CD4-positive, alpha-beta memory T cell (primary cell): ENCODE measurements at regions of chr22 and their contacts with region 1.

Region 1: GRCh38 chr22:30386960-30387827 is at the start of gene RNF215:
- DNase-seq: peak; percentile 66 to 85 (median 79)
- H3K4me3 ChIP-seq: no peak within 1 kb of the TSS
- H3K4me3 Mint-ChIP-seq: peak within 1 kb of the TSS; percentile 63 to 84 (median 79)
- H3K27ac ChIP-seq: no peak within 1 kb of the TSS
- H3K27ac Mint-ChIP-seq: peak within 1 kb of the TSS in 5 of 7 donors; percentile 0 to 94 (median 84)
- H3K4me1 ChIP-seq: peaks cover 13% of the 10 kb centered on the region
- H3K4me1 Mint-ChIP-seq: peaks cover 9 to 15% (median 11%) of the 10 kb centered on the region in 4 donors
- H3K27me3 ChIP-seq: no peaks in the 10 kb centered on the region
- H3K27me3 Mint-ChIP-seq: peaks cover 0 to 2% of the 10 kb centered on the region in 2 donors
- total RNA-seq, gene RNF215: 6.1 to 6.6 TPM

Region 2: DNA sequence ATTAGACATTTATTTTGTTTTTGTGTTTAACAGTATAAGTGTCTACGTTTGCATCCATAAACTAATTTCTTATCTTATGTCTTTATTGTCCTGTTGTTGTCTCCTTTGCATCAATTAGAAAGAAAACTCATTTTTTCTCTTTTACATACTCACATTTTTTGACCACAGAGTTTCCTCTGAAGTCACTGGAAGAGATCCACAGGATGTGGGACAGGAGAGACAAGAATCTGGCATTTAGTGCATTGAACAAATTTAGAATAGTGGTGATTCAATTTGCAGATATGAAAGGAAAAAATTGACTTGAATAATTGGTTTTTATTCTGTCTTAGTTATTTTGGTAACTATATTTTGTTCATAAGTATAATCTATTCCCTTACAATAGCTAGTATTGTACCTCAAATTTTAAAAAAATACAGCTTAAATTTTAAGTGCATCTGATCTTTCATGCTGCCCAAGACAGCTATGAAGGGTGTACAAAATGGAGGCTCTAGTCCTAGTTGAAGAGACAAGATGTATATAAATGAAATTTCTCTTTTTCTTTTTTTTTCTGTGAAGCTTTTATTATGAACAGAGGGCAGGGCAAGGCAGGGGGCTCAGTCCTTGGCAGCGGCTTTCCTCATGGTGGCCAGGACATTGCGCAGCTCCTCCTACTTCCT is 282.6 kb before region 1 on chr22:
- CTCF ChIA-PET with region 1: interaction called, 21 read pairs
- POLR2A ChIA-PET with region 1: no interaction called
- intact Hi-C with region 1: loop called (anchors 1 kb)
- DNase-seq: peak in 4 of 5 donors; percentile 43 to 64 (median 48)
- H3K4me3 ChIP-seq: no peak overlapping the region
- H3K4me3 Mint-ChIP-seq: peak overlapping the region in 3 of 8 donors; percentile 45 to 78 (median 61)
- H3K27ac ChIP-seq: no peak overlapping the region
- H3K27ac Mint-ChIP-seq: peak overlapping the region in 6 of 7 donors; percentile 6 to 83 (median 50)
- H3K4me1 ChIP-seq: peaks cover 33% of the 10 kb centered on the region
- H3K4me1 Mint-ChIP-seq: peaks cover 21 to 50% (median 34%) of the 10 kb centered on the region in 4 donors
- H3K27me3 ChIP-seq: no peaks in the 10 kb centered on the region
- H3K27me3 Mint-ChIP-seq: no peaks in the 10 kb centered on the region

Region 3: DNA sequence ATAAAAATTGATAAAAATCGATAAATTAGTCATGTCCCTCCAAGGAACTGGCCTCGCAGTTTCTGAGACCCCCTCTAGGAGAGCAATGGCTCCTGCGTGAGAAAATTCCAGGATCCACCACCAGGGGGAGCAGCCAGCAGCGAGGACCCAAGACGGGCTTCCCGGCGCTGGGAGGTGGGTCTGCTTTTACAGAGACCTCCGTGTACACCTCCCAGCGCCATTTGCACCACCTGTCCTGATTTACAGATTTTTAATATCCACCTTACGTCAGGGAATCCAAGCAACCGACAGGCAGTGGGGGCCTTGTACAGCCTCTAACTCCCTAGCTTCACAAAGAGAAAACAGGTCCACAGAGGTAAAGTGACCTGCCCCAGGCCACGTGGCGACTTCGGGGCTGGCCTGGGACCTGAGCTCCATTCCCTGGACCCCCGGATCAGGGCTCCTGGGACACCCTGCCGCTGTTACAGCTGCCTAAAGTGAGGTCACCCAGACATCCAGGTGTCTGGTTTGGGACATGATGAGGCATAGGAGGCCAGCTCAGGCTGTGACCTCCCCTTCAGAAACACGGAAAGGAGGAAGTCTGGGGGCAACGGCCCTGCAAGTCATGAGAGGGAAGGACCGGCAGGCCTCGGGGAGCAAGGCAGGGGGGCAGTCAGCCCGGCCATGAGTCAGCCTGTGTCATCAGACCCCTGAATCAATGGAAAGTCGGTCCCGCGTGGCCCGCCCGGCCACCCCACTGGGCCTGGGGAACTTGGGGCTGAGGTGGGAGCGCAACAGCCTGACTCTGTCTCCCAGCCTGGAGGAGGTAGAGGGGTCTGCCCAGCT is 124.1 kb before region 1 on chr22:
- CTCF ChIA-PET with region 1: interaction called, 12 read pairs
- POLR2A ChIA-PET with region 1: interaction called, 5 read pairs
- intact Hi-C with region 1: loop called (anchors 1 kb)
- DNase-seq: peak; percentile 64 to 76 (median 68)
- H3K4me3 ChIP-seq: peak overlapping the region in 1 of 2 donors; percentile 24
- H3K4me3 Mint-ChIP-seq: peak overlapping the region; percentile 70 to 83 (median 74)
- H3K27ac ChIP-seq: peak overlapping the region; percentile 36
- H3K27ac Mint-ChIP-seq: peak overlapping the region; percentile 61 to 90 (median 86)
- H3K4me1 ChIP-seq: peaks cover 48% of the 10 kb centered on the region
- H3K4me1 Mint-ChIP-seq: peaks cover 24 to 56% (median 42%) of the 10 kb centered on the region in 4 donors
- H3K27me3 ChIP-seq: no peaks in the 10 kb centered on the region
- H3K27me3 Mint-ChIP-seq: no peaks in the 10 kb centered on the region

Region 4: GRCh38 chr22:30280505-30280904 is 106.7 kb before region 1 on chr22:
- CTCF ChIA-PET with region 1: interaction called, 392 read pairs
- POLR2A ChIA-PET with region 1: interaction called, 4 read pairs
- intact Hi-C with region 1: no loop called
- DNase-seq: no peak
- H3K4me3 ChIP-seq: no peak overlapping the region
- H3K4me3 Mint-ChIP-seq: no peak overlapping the region
- H3K27ac ChIP-seq: no peak overlapping the region
- H3K27ac Mint-ChIP-seq: no peak overlapping the region
- H3K4me1 ChIP-seq: peaks cover 40% of the 10 kb centered on the region
- H3K4me1 Mint-ChIP-seq: peaks cover 17 to 42% (median 32%) of the 10 kb centered on the region in 4 donors
- H3K27me3 ChIP-seq: no peaks in the 10 kb centered on the region
- H3K27me3 Mint-ChIP-seq: no peaks in the 10 kb centered on the region

Region 5: DNA sequence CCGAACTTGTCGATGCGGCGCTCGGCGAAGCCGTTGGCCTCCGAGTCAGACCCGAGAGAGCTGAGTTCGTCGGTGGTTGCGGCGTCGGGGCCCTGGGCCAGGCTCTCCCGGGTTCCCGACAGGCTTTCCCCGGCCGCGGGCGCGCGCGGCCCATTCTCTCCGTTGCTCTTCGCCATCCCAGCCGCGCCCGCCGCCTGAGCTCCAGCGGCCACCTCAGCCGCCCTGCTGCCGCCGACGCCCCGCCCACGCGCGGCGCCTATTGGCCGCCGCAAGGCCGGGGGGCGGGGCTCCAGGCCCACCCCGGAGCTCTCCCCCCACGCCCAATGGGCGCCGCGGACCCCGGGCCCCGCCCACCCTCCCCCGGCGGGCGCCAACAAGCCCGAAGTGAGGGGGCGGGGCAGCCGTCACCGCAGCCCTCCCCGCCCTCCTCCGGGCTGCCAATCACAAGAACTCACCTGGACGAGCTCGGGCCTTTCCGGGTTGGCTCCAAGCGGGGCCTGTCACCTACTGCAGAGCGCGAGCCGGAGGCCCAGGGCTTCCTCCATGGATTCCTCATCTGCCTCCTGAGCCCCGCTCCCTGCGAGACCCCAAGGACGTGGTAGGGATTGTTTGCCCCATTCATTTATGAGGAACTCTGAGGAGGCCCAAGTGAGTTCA is 60.4 kb before region 1 on chr22 and contains the start of gene TBC1D10A:
- CTCF ChIA-PET with region 1: interaction called, 3 read pairs
- POLR2A ChIA-PET with region 1: interaction called, 7 read pairs
- intact Hi-C with region 1: loop called (anchors 1 kb)
- DNase-seq: peak; percentile 92 to 94 (median 93)
- H3K4me3 ChIP-seq: peak within 1 kb of the TSS; percentile 76 to 78
- H3K4me3 Mint-ChIP-seq: peak within 1 kb of the TSS; percentile 90 to 95 (median 93)
- H3K27ac ChIP-seq: peak within 1 kb of the TSS; percentile 83
- H3K27ac Mint-ChIP-seq: peak within 1 kb of the TSS; percentile 90 to 97 (median 93)
- H3K4me1 ChIP-seq: peaks cover 50% of the 10 kb centered on the region
- H3K4me1 Mint-ChIP-seq: peaks cover 37 to 54% (median 45%) of the 10 kb centered on the region in 4 donors
- H3K27me3 ChIP-seq: no peaks in the 10 kb centered on the region
- H3K27me3 Mint-ChIP-seq: no peaks in the 10 kb centered on the region
- total RNA-seq, gene TBC1D10A: 62.2 to 76.8 TPM

Region 6: GRCh38 chr22:30485362-30485988 is 98.3 kb after region 1 on chr22:
- CTCF ChIA-PET with region 1: interaction called, 86 read pairs
- POLR2A ChIA-PET with region 1: interaction called, 3 read pairs
- intact Hi-C with region 1: no loop called
- DNase-seq: peak; percentile 70 to 77 (median 71)
- H3K4me3 ChIP-seq: no peak overlapping the region
- H3K4me3 Mint-ChIP-seq: no peak overlapping the region
- H3K27ac ChIP-seq: no peak overlapping the region
- H3K27ac Mint-ChIP-seq: peak overlapping the region in 2 of 7 donors; percentile 47 to 73
- H3K4me1 ChIP-seq: no peaks in the 10 kb centered on the region
- H3K4me1 Mint-ChIP-seq: peaks cover 0 to 3% (median 0%) of the 10 kb centered on the region in 4 donors
- H3K27me3 ChIP-seq: no peaks in the 10 kb centered on the region
- H3K27me3 Mint-ChIP-seq: peaks cover 1 to 4% of the 10 kb centered on the region in 2 donors

Region 7: DNA sequence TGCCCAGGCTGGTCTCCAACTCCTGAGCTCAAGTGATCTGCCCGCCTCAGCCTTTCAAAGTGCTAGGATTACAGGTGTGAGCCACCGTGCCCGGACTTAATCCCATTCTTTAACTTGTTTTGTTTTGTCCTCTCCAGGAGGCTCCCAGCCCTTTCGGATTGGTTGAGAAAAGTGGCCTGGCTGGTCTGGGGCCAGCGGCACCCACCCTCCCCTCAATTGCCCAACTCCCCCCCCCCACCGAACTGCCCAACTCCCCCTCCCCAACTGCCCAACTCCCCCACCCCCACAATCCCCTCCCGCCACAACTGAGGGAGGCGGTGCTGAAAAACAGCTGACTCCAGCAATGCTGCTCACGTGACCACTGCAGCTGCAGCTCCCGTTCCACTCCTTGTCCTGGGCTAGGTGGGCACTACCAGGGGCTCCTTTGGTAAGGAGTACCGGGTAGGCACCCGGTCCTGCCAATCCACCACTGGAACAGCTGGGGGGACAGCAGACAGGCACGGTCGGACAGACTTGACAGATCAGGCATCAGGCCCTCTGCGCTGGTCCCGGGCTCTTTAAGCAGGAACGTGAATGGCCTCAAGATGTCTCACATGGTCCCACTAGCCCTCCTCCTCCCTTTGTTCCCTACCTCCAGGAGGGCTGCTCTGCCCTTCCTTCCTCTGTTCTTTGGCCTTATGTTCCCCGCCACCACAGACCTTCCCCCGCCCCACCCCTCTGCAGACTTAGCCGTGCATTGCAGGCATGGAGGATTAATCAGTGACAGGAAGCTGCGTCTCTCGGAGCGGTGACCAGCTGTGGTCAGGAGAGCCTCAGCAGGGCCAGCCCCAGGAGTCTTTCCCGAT is 219.5 kb after region 1 on chr22 and contains the start of gene TCN2:
- CTCF ChIA-PET with region 1: no interaction called
- POLR2A ChIA-PET with region 1: no interaction called
- intact Hi-C with region 1: loop called (anchors 2 kb)
- DNase-seq: peak; percentile 13 to 57 (median 18)
- H3K4me3 ChIP-seq: peak within 1 kb of the TSS; percentile 57 to 81
- H3K4me3 Mint-ChIP-seq: peak within 1 kb of the TSS; percentile 86 to 94 (median 90)
- H3K27ac ChIP-seq: no peak within 1 kb of the TSS
- H3K27ac Mint-ChIP-seq: peak within 1 kb of the TSS in 6 of 7 donors; percentile 50 to 92 (median 64)
- H3K4me1 ChIP-seq: peaks cover 16% of the 10 kb centered on the region
- H3K4me1 Mint-ChIP-seq: peaks cover 11 to 30% (median 20%) of the 10 kb centered on the region in 4 donors
- H3K27me3 ChIP-seq: no peaks in the 10 kb centered on the region
- H3K27me3 Mint-ChIP-seq: peaks cover 0 to 1% of the 10 kb centered on the region in 2 donors
- total RNA-seq, gene TCN2: 0.93 to 1.2 TPM